CD4-positive, alpha-beta memory T cell (primary cell): ENCODE measurements at regions of chr3 and their contacts with region 1.

Region 1: GRCh38 chr3:127574880-127575878 is 15.4 kb downstream of the TPRA1 start:
- DNase-seq: peak; percentile 82 to 87 (median 84)
- H3K4me3 ChIP-seq: no peak overlapping the region
- H3K4me3 Mint-ChIP-seq: peak overlapping the region in 7 of 8 donors; percentile 14 to 63 (median 48)
- H3K27ac ChIP-seq: peak overlapping the region; percentile 16
- H3K27ac Mint-ChIP-seq: peak overlapping the region; percentile 24 to 92 (median 82)
- H3K4me1 ChIP-seq: peaks cover 9% of the 10 kb centered on the region
- H3K4me1 Mint-ChIP-seq: peaks cover 6 to 17% (median 11%) of the 10 kb centered on the region in 4 donors
- H3K27me3 ChIP-seq: no peaks in the 10 kb centered on the region
- H3K27me3 Mint-ChIP-seq: no peaks in the 10 kb centered on the region

Region 2: DNA sequence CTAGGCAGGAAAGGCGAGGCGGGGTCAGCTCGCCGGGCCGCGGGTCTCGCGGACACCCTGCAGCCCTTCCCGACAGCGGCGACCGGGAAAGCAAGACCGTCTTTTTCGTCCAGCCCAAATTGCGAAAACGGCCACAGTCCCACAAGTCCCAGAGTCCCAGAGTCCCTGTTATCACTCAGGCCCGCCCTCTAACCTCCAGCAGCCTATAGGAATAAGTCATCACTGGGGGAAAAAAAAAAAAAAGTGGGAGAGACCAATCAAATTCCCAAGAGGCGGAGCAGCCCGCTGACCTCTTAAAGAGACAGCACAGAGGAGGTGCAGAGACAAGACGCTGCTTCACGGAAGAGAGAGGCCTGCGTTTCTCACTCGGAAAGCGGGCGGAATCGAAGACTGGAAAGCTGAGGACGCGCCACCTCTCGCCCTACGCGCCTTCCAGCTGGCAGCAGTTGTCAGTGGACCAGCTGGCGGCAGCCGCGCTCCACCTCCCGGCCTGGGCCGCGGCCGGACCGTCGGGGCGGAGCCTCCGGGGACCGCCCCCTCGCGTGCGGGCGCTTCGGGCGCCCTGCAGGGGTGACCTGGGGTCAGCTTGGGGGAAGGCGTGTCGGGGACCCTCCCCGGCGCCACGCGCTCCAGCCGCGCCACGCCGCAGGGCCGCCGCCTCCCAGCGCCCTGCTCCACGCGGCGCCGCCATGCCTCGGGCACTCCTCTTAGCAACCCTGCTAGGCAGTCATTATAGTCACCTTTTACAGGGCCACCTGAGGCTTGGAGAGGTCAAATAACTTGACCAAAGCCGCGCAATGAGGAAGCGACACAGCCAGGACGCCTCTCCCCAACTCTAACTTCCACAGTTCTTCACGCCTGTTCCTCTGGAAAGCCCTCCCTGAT is 15.7 kb after region 1 on chr3 and contains the start of gene TPRA1:
- CTCF ChIA-PET with region 1: interaction called, 68 read pairs
- POLR2A ChIA-PET with region 1: interaction called, 23 read pairs
- intact Hi-C with region 1: loop called (anchors 1 kb)
- DNase-seq: peak; percentile 83 to 90 (median 88)
- H3K4me3 ChIP-seq: peak within 1 kb of the TSS; percentile 81 to 83
- H3K4me3 Mint-ChIP-seq: peak within 1 kb of the TSS; percentile 96 to 100 (median 98)
- H3K27ac ChIP-seq: peak within 1 kb of the TSS; percentile 73
- H3K27ac Mint-ChIP-seq: peak within 1 kb of the TSS; percentile 93 to 98 (median 96)
- H3K4me1 ChIP-seq: peaks cover 26% of the 10 kb centered on the region
- H3K4me1 Mint-ChIP-seq: peaks cover 16 to 50% (median 36%) of the 10 kb centered on the region in 4 donors
- H3K27me3 ChIP-seq: no peaks in the 10 kb centered on the region
- H3K27me3 Mint-ChIP-seq: no peaks in the 10 kb centered on the region
- total RNA-seq, gene TPRA1: 28.3 to 29.7 TPM

Region 3: GRCh38 chr3:127628788-127629466 is 53.7 kb after region 1 on chr3 and contains the start of gene PODXL2:
- CTCF ChIA-PET with region 1: interaction called, 13 read pairs
- POLR2A ChIA-PET with region 1: no interaction called
- intact Hi-C with region 1: no loop called
- DNase-seq: peak in 4 of 5 donors; percentile 34 to 51 (median 36)
- H3K4me3 ChIP-seq: peak within 1 kb of the TSS; percentile 44 to 67
- H3K4me3 Mint-ChIP-seq: peak within 1 kb of the TSS; percentile 85 to 94 (median 89)
- H3K27ac ChIP-seq: no peak within 1 kb of the TSS
- H3K27ac Mint-ChIP-seq: peak within 1 kb of the TSS; percentile 78 to 91 (median 89)
- H3K4me1 ChIP-seq: peaks cover 21% of the 10 kb centered on the region
- H3K4me1 Mint-ChIP-seq: peaks cover 29 to 53% (median 37%) of the 10 kb centered on the region in 4 donors
- H3K27me3 ChIP-seq: peaks cover 4% of the 10 kb centered on the region
- H3K27me3 Mint-ChIP-seq: peaks cover 10 to 14% of the 10 kb centered on the region in 2 donors
- total RNA-seq, gene PODXL2: 3.3 to 4.2 TPM

Region 4: DNA sequence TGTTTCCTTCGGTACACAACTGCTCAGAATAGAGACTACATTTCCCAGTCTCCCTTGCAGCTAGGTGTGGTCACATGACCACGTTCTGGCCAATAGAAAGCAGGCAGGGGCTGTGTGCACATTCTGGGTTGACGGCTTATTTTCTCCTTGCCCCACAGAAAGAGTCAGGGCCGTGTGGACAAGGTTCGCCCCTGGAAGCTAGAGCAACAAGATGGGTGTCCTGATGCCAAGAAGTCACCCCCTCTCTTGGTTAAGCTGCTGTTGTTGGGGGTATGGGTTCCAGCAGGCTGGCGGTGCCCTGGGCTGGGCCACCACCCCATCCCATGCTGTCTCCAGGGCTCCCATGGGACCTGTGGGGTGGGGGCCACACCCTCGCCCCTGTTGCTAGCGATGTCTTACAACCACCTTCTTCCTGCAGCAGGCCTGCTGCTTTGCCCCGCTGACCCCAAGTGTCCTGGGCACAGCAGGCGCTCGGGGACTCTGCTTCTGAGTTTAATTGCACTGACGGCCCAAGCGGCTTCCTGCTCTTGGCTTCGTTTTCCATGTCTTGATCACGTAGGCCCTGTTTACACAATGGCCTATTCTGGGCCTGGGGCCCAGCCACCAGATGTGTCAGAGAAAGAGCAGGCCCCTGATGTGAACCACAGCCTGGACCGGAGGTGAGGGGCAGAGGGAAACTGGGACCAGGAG is 122.5 kb after region 1 on chr3:
- CTCF ChIA-PET with region 1: interaction called, 63 read pairs
- POLR2A ChIA-PET with region 1: interaction called, 5 read pairs
- intact Hi-C with region 1: no loop called
- DNase-seq: peak; percentile 35 to 54 (median 50)
- H3K4me3 ChIP-seq: no peak overlapping the region
- H3K4me3 Mint-ChIP-seq: peak overlapping the region in 3 of 8 donors; percentile 17 to 68 (median 65)
- H3K27ac ChIP-seq: no peak overlapping the region
- H3K27ac Mint-ChIP-seq: peak overlapping the region in 2 of 7 donors; percentile 4 to 20
- H3K4me1 ChIP-seq: no peaks in the 10 kb centered on the region
- H3K4me1 Mint-ChIP-seq: peaks cover 0 to 4% (median 2%) of the 10 kb centered on the region in 4 donors
- H3K27me3 ChIP-seq: no peaks in the 10 kb centered on the region
- H3K27me3 Mint-ChIP-seq: peaks cover 1 to 2% of the 10 kb centered on the region in 2 donors

Region 5: GRCh38 chr3:128254116-128254768 is 679.1 kb after region 1 on chr3:
- CTCF ChIA-PET with region 1: no interaction called
- POLR2A ChIA-PET with region 1: no interaction called
- intact Hi-C with region 1: no loop called
- DNase-seq: no peak
- H3K4me3 ChIP-seq: no peak overlapping the region
- H3K4me3 Mint-ChIP-seq: no peak overlapping the region
- H3K27ac ChIP-seq: no peak overlapping the region
- H3K27ac Mint-ChIP-seq: peak overlapping the region in 1 of 7 donors; percentile 23
- H3K4me1 ChIP-seq: no peaks in the 10 kb centered on the region
- H3K4me1 Mint-ChIP-seq: peaks cover 6 to 16% (median 9%) of the 10 kb centered on the region in 4 donors
- H3K27me3 ChIP-seq: no peaks in the 10 kb centered on the region
- H3K27me3 Mint-ChIP-seq: no peaks in the 10 kb centered on the region